AG04450 (cell line): ENCODE measurements at regions of chr5 and their contacts with region 1.

Region 1: GRCh38 chr5:39714036-39714698 is 289.4 kb upstream of the DAB2 start:
- DNase-seq: peak; percentile 39
- H3K4me3 ChIP-seq: no peak overlapping the region
- H3K27ac ChIP-seq: no peak overlapping the region
- H3K27me3 ChIP-seq: no peaks in the 10 kb centered on the region
- CTCF ChIP-seq: peak; percentile 86

Region 2: GRCh38 chr5:39578887-39579497 is 135.2 kb before region 1 on chr5:
- CTCF ChIA-PET with region 1: interaction called, 21 read pairs
- POLR2A ChIA-PET with region 1: no interaction called
- DNase-seq: no peak
- H3K4me3 ChIP-seq: no peak overlapping the region
- H3K27ac ChIP-seq: no peak overlapping the region
- H3K27me3 ChIP-seq: no peaks in the 10 kb centered on the region
- CTCF ChIP-seq: peak; percentile 50

Region 3: DNA sequence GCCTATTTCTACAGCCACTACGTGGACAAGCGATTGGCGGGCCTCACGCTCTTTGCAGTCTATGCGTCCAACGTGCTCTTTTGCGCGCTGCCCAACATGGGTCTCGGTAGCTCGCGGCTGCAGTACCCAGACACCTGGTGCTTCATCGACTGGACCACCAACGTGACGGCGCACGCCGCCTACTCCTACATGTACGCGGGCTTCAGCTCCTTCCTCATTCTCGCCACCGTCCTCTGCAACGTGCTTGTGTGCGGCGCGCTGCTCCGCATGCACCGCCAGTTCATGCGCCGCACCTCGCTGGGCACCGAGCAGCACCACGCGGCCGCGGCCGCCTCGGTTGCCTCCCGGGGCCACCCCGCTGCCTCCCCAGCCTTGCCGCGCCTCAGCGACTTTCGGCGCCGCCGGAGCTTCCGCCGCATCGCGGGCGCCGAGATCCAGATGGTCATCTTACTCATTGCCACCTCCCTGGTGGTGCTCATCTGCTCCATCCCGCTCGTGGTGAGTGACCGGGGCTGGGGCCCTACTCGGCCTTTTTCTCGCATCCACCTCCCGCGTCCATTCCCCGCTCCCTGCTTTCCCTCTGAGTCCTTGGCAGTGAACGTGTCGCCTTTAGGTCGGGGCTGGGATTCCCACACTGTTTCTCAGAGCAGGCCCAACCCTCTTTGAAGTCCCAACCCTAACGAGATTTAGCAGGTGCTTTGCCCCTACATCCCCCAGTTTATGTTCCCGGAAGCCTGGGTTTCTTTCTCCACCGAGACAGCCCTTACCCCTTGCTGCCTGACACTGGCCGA is 967.4 kb after region 1 on chr5:
- CTCF ChIA-PET with region 1: interaction called, 27 read pairs
- POLR2A ChIA-PET with region 1: no interaction called
- DNase-seq: no peak
- H3K4me3 ChIP-seq: peak overlapping the region; percentile 77
- H3K27ac ChIP-seq: no peak overlapping the region
- H3K27me3 ChIP-seq: no peaks in the 10 kb centered on the region
- CTCF ChIP-seq: no peak

Region 4: GRCh38 chr5:40688127-40688761 is 974.1 kb after region 1 on chr5:
- CTCF ChIA-PET with region 1: interaction called, 53 read pairs
- POLR2A ChIA-PET with region 1: interaction called, 3 read pairs
- DNase-seq: peak; percentile 72
- H3K4me3 ChIP-seq: no peak overlapping the region
- H3K27ac ChIP-seq: no peak overlapping the region
- H3K27me3 ChIP-seq: no peaks in the 10 kb centered on the region
- CTCF ChIP-seq: peak; percentile 87

Region 5: DNA sequence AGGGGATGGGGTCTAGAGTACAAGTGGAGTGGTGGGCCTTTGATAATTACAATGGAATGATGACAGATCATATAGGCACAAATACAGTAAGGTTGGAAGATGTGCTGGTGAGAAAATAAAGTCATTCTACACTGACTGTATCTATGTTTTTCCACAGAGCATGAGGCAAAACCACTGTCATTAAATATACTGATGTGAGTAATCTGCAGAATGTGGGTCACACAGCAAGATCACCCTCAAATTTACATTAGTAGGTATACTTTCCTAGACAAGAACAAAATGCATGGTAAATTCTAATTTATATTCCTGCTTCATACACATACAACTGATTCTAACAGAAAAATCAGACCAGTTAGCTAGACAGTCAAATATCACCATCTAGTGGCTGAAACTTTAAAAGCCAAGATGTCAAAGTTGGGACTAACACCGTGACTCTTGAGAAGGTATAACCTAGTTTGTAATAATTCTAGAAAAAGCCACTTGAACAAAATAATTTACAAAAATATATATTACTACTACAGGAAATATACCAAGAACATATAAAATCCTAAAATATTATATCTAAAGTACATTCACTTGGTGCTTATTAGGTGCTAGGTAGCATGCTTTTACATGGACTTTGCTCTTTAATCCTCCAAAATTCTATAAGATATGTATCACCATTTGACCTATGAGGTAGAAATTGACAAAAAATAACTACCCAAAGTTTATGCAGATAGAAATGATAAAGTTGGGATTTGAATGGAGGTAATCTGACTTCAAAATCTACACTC is 1022.1 kb after region 1 on chr5:
- CTCF ChIA-PET with region 1: interaction called, 21 read pairs
- POLR2A ChIA-PET with region 1: no interaction called
- DNase-seq: no peak
- H3K4me3 ChIP-seq: no peak overlapping the region
- H3K27ac ChIP-seq: no peak overlapping the region
- H3K27me3 ChIP-seq: no peaks in the 10 kb centered on the region
- CTCF ChIP-seq: peak; percentile 80